ENCODE measurements at regions of chr20 and their contacts with region 1.

Region 1: GRCh38 chr20:2523919-2524708 is 12.3 kb upstream of the TMC2 start:
- DNase-seq: peak; percentile 88 to 90
- ATAC-seq: peak; percentile 78 to 87 (median 84)
- H3K4me3 ChIP-seq: peak overlapping the region; percentile 58 to 95 (median 72)
- H3K27ac ChIP-seq: peak overlapping the region; percentile 55 to 96 (median 92)
- H3K4me1 ChIP-seq: peaks cover 0 to 35% (median 6%) of the 10 kb centered on the region in 9 donors
- H3K27me3 ChIP-seq: peaks cover 0 to 5% (median 0%) of the 10 kb centered on the region in 7 donors
- CTCF ChIP-seq: peak; percentile 88 to 99 (median 96)

Region 2: GRCh38 chr20:2643708-2644107 is 119.6 kb after region 1 on chr20:
- intact Hi-C with region 1: loop called in 7 of 10 experiments (anchors 2 to 10 kb)
- DNase-seq: no peak
- ATAC-seq: no peak
- H3K4me3 ChIP-seq: no peak overlapping the region
- H3K27ac ChIP-seq: no peak overlapping the region
- H3K4me1 ChIP-seq: peaks cover 0 to 6% (median 0%) of the 10 kb centered on the region in 9 donors
- H3K27me3 ChIP-seq: no peaks in the 10 kb centered on the region
- CTCF ChIP-seq: no peak

Region 3: GRCh38 chr20:2651772-2652723 is 127.9 kb after region 1 on chr20 and contains the start of gene NOP56:
- intact Hi-C with region 1: loop called in 9 of 10 experiments (anchors 2 to 10 kb)
- DNase-seq: peak; percentile 91 to 95
- ATAC-seq: peak; percentile 96 to 99 (median 98)
- H3K4me3 ChIP-seq: peak within 1 kb of the TSS; percentile 69 to 98 (median 93)
- H3K27ac ChIP-seq: peak within 1 kb of the TSS; percentile 67 to 97 (median 94)
- H3K4me1 ChIP-seq: peaks cover 3 to 33% (median 25%) of the 10 kb centered on the region in 9 donors
- H3K27me3 ChIP-seq: no peaks in the 10 kb centered on the region
- CTCF ChIP-seq: peak in 1 of 9 donors; percentile 4
- total RNA-seq, gene NOP56: 37.1 to 77.1 (median 46.7) TPM

Region 4: DNA sequence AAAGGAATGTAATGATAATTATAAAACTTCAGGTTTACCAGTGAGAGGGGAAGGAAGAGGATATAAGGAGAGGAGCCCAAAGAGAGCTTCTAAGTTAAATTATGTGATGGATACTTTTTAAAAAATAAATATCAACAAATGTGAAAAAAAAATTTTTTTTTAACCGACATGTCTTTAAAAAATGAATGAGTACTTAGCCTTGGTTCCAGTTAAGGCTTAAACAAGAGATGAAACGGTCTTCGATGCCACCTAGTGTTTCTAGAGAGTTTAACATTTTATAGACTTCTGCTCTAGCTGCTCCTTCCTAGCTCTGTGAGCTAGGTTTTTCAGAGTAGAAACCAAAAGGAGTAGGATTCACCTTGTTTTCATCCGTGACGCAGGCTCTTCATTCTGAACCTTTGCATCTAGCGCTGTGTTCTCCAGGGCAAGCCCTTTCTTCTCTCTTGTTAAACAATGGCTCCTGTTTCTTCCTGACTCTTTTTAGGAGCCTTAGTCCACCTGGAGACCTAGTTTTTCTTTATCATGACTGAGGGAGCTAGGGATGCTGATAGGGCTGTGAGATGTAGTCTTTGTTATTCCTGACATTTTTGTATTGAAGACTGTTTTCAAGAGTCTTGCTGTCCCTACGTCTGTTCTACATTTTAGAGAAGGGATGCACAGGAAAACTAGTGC is 476.9 kb after region 1 on chr20:
- intact Hi-C with region 1: loop called in 2 of 10 experiments (anchors 10 kb)
- DNase-seq: peak in 1 of 2 donors; percentile 10
- ATAC-seq: peak in 2 of 8 donors; percentile 61
- H3K4me3 ChIP-seq: no peak overlapping the region
- H3K27ac ChIP-seq: no peak overlapping the region
- H3K4me1 ChIP-seq: no peaks in the 10 kb centered on the region
- H3K27me3 ChIP-seq: no peaks in the 10 kb centered on the region
- CTCF ChIP-seq: peak in 8 of 9 donors; percentile 34 to 70 (median 49)

Measured in heart right ventricle (tissue), 16 donors.